ENCODE measurements at regions of chr11 and their contacts with region 1.

Region 1: DNA sequence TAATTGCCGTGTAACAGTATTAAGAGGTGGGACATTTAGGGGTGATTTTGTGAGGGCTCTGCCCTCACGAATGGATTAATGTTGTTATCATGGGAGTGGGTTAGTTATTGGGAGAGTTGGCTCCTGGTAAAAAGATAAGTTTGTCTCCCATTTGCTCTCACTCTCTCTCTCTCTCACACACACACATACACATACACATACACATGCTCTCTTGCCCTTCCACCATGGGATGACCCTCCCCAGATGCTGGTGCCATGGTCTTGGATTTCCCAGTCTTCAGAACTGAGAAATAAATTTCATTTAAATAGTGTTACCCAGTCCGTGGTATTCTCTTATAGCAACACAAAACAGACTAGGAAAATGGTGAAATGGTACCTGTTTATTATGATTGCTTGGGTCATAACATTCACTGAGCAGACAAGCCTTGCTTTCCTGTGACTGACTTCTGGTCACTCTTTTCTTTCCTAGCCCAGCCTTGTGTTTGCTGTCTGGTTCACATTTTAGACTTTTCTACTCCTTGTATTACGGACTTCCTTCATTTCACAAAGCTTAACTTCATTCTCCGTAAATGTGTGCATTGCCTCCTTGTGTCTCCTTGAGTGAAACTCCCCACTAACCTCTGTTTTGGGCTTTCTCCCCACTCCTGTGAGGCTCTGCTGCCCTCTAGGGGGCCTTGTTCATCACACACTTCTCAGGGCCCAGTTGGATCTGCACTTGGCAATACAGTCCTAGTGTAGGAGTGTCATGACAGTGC is 206.5 kb upstream of the CTSC start:
- DNase-seq: peak; percentile 85
- ATAC-seq: peak; percentile 98
- H3K4me3 Mint-ChIP-seq: no peak overlapping the region
- H3K27ac Mint-ChIP-seq: no peak overlapping the region
- H3K4me1 Mint-ChIP-seq: peaks cover 4% of the 10 kb centered on the region
- H3K27me3 Mint-ChIP-seq: no peaks in the 10 kb centered on the region
- CTCF ChIP-seq: peak; percentile 95

Region 2: DNA sequence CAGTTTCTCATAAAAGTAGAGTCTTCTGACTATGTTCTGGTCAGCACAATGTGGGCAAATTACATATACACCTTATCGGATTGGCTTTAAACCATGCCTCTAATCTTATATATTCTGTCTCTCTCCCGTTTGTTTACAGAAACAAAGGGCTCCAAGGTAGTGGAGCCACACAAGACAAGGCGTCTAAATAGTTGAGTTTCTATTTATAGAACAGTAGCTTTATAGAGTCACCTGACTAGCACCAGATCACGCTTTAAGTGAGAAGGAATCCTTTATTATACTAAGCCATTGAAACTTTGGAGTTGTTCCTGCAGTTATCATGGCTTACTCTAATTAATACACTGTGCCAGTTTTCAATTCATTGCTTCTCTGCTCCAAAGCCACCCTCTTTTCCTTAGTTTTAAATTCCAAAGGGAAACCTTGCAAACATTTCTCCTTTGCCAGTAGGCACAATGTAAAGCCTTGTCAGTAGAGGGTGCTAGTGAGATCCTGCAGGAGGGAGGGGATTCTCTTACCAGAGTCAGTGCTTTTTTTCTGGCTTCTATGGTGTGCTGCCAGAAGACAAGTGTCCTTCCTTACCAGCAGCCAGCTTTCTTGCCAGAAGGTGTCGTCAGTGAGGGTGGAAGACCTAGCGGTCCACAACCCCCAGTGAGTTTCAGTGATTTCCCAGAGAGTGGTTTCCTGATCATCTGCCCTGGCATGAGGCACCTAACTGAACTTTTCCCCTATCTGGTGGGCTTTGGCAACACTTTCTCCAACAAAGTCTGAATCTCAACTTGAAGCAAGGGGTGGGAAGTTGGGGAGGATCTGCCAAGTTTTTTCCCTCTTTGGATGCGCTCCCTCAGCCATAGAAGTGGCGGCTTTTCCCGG is 440.5 kb before region 1 on chr11:
- CTCF ChIA-PET with region 1: interaction called, 5 read pairs
- POLR2A ChIA-PET with region 1: no interaction called
- intact Hi-C with region 1: loop called (anchors 5 kb)
- DNase-seq: peak; percentile 41
- ATAC-seq: peak; percentile 89
- H3K4me3 Mint-ChIP-seq: no peak overlapping the region
- H3K27ac Mint-ChIP-seq: no peak overlapping the region
- H3K4me1 Mint-ChIP-seq: no peaks in the 10 kb centered on the region
- H3K27me3 Mint-ChIP-seq: peaks cover 8% of the 10 kb centered on the region
- CTCF ChIP-seq: peak; percentile 79

Region 3: DNA sequence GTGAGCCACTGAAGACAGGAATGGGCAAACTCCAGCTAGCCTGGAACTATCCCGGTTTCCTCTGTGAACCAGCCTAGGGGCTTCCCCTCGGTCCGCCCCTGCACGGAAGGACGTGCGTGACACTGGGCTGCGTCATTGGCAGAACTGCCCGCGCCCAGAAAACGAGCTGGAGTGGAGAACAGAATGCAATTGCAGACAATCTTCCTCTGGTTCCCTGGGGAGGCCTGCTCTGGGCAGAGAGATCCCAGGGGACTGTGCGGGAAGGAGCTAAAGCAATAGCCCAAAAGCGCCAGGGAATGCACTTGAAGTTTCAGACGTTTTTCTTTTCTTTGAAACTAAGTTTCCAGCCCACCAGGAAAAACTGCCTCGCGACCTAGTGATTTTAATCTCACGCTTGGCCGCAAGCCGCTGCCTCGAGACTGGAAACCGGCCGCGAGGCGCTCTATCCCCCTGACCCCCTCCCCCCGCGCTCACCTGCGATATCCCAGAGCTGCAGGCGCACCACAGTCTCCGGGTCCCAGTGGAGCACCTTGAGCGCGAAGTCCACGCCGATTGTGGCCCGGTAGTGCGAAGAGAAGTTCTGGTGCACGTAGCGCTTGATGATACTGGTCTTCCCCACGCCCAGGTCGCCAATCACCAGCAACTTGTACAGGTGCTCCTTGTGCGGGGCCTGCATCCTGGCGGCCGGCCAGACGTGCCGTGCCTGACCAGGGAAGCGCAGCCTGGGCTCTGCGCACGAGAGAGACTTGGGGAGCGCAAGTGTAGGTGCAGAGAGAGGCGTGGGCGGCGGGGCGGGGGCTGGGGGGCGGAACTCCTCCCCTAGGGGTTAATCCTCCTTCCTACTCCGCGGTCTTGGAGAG is 369.1 kb before region 1 on chr11 and contains the start of gene RAB38:
- CTCF ChIA-PET with region 1: interaction called, 5 read pairs
- POLR2A ChIA-PET with region 1: no interaction called
- intact Hi-C with region 1: loop called (anchors 10 kb)
- DNase-seq: peak; percentile 76
- ATAC-seq: peak; percentile 59
- H3K4me3 Mint-ChIP-seq: peak within 1 kb of the TSS; percentile 72
- H3K27ac Mint-ChIP-seq: peak within 1 kb of the TSS; percentile 79
- H3K4me1 Mint-ChIP-seq: peaks cover 41% of the 10 kb centered on the region
- H3K27me3 Mint-ChIP-seq: peaks cover 8% of the 10 kb centered on the region
- CTCF ChIP-seq: no peak
- total RNA-seq, gene RAB38: 3.2 to 3.4 TPM

Region 4: DNA sequence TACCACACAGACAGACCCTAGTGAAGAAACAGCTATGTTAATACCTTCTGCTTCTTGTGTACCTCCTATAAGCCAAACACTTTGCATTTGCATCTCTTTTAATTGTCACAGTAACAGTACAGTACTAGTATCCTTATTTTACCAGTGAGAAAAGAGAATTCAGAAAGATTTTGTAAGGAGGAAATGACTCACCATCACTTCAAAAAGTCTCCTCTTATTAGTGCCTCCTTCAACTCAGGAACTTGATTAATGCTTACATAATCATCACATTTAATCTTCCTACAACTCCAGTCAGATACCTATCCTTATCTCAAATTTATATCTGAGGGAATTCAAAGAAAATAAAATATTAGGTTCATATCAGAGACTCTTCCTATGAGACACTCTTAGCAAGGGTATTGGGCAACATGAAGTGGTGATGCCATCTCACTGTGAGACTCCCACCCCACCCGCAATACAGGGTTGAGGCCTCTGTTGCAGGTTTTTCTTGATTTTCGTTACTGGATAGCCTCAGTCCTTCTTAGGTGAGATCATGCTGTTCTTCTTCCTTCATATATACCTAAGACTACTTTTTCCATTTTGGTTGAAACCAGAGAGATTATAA is 180.4 kb before region 1 on chr11:
- CTCF ChIA-PET with region 1: no interaction called
- POLR2A ChIA-PET with region 1: no interaction called
- intact Hi-C with region 1: no loop called
- DNase-seq: no peak
- ATAC-seq: peak; percentile 66
- H3K4me3 Mint-ChIP-seq: no peak overlapping the region
- H3K27ac Mint-ChIP-seq: no peak overlapping the region
- H3K4me1 Mint-ChIP-seq: peaks cover 29% of the 10 kb centered on the region
- H3K27me3 Mint-ChIP-seq: no peaks in the 10 kb centered on the region
- CTCF ChIP-seq: no peak